ENCODE measurements at regions of chr17 and their contacts with region 1.

Region 1: DNA sequence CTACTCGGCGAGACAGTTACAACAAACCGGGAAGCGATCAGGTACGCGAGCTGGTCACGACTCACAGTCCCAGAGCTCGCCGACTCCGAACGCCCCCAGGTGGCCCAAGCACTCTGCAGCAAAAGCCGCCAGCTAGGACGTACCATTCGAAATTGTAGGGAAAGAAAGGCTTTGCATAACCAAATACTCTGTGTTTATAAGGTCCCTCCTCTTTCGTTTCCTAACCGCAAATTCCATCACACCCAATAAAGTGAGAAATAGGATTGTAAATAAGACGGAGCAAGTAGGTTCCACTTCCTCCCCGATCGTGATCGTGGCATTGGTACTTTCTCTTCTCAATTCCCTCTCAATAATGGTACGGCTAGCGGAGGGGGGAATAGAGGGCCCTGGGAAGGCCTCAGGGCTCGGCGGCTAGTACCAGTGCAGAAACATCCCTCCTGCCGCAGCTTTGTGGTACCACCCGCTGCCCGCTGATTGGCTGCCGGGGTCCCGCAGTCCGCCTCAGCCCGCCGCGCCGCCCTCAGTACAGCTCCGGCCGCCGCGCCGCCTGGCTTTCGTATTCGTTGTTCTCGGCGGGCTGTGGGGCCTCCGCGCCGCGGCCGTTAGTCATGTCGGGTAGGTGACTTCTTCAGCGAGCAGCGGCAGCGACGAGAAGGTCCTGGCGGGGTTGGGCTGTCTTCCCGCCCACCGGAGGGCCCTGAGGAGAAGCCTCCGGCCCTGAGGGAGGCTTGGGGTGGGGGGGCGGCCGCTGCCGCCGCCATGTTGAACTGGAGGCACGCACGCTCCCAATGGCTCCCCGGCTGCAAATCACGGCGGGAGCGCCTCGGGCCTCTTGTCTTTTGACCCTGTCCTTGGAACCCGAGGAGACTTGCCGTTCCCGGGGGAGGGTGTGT is at the start of gene TAF15:
- DNase-seq: peak; percentile 94
- H3K4me3 ChIP-seq: peak within 1 kb of the TSS; percentile 71
- H3K27me3 ChIP-seq: no peaks in the 10 kb centered on the region
- CTCF ChIP-seq: peak; percentile 91
- polyA plus RNA-seq, gene TAF15: 27.4 and 49.6 TPM in 2 replicates

Region 2: GRCh38 chr17:35612924-35613521 is 196.2 kb before region 1 on chr17:
- CTCF ChIA-PET with region 1: interaction called, 10 read pairs
- POLR2A ChIA-PET with region 1: no interaction called
- DNase-seq: no peak
- H3K4me3 ChIP-seq: no peak overlapping the region
- H3K27me3 ChIP-seq: no peaks in the 10 kb centered on the region
- CTCF ChIP-seq: peak; percentile 74

Region 3: DNA sequence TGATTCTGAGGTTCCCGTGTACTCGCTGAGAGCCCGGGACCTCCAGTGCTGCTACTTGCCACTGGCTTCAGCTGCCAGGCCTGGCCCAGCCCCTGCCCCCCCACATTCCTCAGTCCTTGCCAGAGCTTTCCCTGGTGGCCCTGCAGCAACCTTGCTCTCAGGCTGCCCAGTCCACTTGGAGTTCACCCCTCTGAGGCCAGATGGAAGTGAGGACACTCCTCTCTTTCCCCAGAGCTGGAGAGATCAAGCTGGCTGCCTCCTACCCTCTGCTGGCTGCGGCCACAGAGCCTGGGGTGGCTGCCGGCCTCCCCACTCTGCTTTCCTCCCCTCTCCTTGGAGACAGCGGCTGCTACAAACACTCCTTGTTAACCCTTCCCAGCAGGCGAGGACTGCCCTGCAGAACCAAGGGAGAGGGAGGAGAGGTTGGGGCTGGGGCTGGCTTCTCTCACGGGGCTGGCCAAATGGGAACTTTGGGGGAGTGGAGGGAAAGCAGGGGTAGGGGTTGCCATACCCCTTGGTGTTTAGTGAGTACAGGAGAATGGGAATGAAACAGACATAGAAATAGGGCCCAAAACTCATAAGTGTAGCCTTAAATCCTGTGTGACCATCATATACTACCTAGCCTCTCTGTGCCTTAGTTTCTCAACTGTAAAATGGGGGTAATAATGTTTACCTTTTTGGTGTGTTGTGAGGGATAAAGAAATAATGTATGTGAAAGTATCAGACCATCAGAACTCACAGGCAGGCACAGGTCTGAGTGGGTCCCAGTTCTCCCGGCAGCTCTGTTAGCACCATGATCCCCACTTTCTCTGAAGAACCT is 56.1 kb before region 1 on chr17 and contains the start of gene GAS2L2:
- CTCF ChIA-PET with region 1: interaction called, 17 read pairs
- POLR2A ChIA-PET with region 1: interaction called, 3 read pairs
- DNase-seq: no peak
- H3K4me3 ChIP-seq: no peak within 1 kb of the TSS
- H3K27me3 ChIP-seq: peaks cover 18% of the 10 kb centered on the region
- CTCF ChIP-seq: no peak
- polyA plus RNA-seq, gene GAS2L2: not detected in 2 replicates

Region 4: DNA sequence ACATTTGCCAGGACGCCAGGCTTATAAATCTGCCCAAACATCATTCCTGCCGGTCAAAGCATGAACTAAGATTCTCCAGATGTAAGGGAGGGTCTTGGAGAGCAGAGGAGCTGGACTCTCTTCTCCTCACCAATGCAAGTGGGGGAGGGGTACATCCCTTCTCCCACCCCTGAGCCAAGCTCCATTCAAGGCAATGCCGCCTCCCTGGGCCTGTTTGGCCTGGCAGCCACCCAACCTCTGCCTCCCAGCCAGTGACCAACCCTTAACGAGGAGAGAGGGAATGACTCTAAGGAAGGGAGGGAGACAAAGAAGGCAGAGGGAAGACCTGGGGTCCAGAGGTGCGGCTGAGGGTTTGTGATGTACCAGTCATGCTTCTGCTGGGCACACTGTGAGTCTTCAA is 34.7 kb before region 1 on chr17:
- CTCF ChIA-PET with region 1: interaction called, 425 read pairs
- POLR2A ChIA-PET with region 1: no interaction called
- DNase-seq: no peak
- H3K4me3 ChIP-seq: no peak overlapping the region
- H3K27me3 ChIP-seq: peaks cover 37% of the 10 kb centered on the region
- CTCF ChIP-seq: no peak

Region 5: DNA sequence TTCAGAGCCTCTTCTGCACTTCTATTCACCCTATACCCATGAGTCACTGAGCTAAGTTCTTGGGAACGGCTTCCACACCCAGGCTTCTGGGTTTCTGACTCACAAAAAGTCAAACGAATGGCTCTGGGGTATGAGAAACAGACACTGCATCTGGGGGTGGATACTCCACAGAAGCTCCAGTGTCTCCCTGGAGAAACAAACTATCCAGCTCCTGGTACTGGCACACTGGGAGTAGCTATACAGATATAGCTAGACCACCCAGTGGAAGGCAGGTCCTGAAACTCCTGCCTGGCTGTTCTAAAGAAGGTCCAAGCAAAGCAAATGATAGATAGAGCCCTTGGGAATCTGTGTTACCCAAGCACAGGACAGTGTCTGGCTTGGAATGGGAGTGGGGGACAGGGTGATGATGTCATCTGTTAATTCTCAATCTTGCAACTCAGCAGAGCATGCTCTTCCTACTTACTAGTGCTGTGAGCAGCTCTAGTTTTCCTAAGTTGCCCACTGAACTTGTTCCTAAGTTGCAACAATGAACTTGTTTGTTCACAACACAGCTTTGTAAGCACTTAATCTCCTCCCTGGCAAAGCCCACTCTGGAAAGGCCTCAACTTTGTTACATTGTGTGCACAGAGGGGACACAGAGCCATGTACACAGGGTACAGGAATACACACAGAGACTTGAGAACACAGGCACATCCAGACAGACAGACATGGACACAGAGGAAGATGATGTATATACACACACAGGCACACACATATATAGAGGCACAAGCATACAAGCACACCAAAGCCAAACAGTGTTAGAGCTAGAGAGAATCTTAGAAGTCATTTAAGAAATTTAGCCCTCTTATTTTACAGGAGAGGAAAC is 20.5 kb before region 1 on chr17:
- CTCF ChIA-PET with region 1: interaction called, 14 read pairs
- POLR2A ChIA-PET with region 1: no interaction called
- DNase-seq: peak; percentile 78
- H3K4me3 ChIP-seq: no peak overlapping the region
- H3K27me3 ChIP-seq: peaks cover 13% of the 10 kb centered on the region
- CTCF ChIP-seq: no peak

Region 6: GRCh38 chr17:35794988-35795824 is 14.0 kb before region 1 on chr17 and contains the start of gene MMP28:
- CTCF ChIA-PET with region 1: interaction called, 11 read pairs
- POLR2A ChIA-PET with region 1: interaction called, 5 read pairs
- DNase-seq: no peak
- H3K4me3 ChIP-seq: peak within 1 kb of the TSS; percentile 36
- H3K27me3 ChIP-seq: peaks cover 42% of the 10 kb centered on the region
- CTCF ChIP-seq: no peak
- polyA plus RNA-seq, gene MMP28: 0.15 and 0.28 TPM in 2 replicates